Cardiac septum (tissue), 1 donor: ENCODE measurements at regions of chr9 and their contacts with region 1.

Region 1: GRCh38 chr9:124771021-124771866 is at the start of gene NR6A1:
- DNase-seq: peak; percentile 98
- total RNA-seq, gene NR6A1: 2.2 TPM

Region 2: DNA sequence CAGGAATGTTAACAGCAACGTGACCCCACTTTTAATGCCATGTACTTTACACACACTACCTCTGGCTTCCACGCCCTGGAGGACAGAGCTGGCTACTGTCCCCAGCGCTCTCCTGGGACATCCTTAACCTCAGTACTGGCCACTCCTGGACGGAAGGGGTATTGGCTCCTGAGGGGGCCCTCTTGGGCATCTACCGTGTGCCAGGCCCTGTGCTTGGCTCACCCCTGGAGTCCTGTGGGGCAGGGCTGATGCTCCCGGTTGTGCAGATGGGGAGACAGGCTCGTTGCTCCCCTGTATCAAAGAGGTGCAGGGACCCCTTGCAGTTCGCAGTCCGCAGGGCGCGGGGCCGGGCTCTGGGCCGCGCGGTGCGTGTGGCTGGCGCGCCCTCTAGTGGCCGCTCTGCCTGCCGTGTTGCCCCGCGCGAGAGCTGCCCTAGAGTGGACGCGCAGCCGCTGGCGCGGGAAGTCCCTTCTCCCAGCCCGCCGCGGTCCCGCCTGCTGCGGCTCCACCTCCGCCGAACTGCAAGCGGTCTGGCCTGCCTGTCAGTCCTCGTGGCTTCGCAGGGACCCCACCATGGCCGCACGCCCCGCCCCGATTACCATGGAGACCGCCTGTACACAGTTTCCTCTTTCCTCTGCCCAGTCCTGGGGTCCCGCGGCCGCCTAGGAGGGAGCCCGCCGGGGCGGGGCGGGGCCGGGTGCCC is 81.7 kb after region 1 on chr9 and contains the start of gene WDR38:
- intact Hi-C with region 1: loop called (anchors 1 kb)
- DNase-seq: peak; percentile 91
- total RNA-seq, gene WDR38: not detected

Region 3: GRCh38 chr9:125143375-125144090 is 372.3 kb after region 1 on chr9 and contains the start of gene SCAI:
- intact Hi-C with region 1: loop called (anchors 10 kb)
- DNase-seq: peak; percentile 100
- total RNA-seq, gene SCAI: 4.8 TPM

Region 4: GRCh38 chr9:125374443-125375309 is 603.4 kb after region 1 on chr9:
- intact Hi-C with region 1: loop called (anchors 10 kb)
- DNase-seq: peak; percentile 82